Posterior vena cava (tissue), 2 donors: ENCODE measurements at regions of chr14 and their contacts with region 1.

Region 1: DNA sequence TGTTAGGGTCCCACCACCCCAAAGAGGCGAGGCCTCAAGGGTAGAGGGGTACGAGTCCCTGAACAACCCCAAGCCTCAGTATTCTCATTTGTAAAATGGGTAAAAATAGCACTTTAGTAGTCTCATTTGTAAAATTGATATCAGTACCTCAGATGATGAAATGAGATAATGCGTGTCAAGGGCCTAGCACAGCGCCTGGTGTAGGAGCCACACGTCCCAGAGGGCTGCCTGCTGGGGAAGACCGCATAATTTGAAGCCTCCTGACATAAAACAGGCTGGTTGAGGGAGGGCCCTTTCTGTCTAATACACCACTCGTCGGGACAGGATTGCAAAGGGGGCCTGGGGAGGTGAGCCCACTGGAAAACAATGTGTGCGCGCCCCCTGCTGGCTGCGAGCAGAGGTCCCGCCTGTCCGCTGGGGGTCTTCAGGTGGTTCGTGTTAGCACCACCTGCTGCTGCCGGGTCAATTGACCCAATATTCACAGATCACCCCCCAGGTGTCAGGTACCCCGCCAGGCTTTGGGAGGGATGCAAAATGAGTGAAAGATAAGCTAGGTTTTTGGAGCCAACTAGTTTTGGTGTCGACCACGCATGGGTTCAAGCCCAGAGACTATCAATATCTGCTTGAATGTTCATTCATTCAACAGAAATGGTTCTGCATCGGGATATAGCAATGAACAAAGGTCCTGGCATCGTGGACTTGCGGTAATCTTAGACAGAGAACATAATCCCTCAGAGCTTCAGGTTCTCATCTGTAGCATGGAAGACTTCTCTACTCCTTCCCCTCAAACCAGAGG is 24.7 kb upstream of the IRF2BPL start:
- DNase-seq: peak; percentile 88

Region 2: DNA sequence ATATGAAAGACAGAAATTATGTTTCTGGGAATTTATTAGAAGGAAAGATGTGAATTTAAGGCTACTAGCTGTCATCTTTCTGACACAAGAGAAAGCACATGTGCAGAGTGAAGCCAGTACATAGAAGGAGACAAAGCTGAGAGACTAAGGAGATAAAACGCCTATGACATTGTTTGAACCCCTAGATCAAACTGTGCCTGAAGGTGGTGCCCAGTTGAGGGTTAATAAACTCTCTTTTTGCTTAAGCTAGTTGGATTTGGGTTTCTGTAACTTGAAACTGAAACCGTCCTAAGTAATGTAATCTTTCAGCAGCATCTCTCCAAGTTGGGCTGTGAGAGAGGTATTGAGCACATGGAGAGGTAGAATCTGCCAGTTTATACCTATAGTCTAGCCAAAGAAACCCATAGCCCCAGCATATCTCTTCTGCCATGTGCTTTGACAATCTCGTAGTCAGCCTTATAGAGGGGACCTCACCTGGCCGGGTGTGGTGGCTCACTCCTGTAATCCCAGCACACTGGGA is 142.8 kb before region 1 on chr14:
- intact Hi-C with region 1: loop called in 1 of 2 experiments (anchors 5 kb)
- DNase-seq: no peak

Region 3: DNA sequence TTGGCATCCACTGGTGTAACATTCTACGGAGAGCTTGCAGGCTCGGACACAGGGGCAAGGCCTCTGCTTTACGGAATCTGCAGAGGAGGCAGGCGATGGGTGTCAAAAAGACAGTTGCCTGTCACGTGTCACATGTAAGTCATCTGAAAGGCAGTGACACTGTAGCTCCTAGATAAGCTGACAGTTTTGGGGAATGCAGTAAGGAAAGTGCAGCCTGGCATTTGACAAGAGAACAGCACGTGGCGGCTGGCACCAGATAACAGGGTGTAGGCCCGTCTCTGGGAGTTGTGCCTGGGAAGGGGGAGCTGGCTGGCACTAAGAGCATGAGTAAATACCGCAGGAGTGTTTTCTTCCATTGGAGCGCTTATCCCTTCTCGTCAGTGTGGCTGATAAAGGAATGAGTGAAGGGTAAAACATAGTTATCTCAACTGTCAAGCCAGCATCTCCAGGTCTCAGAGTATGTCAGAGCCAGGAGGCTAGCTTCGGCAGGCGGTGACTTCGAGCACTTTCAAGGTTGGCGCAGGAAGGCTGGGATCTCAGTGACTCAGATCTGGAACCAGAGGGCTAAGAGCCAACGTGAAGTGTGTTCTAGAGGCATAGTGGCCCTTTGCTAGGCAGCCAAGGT is 772.8 kb after region 1 on chr14:
- intact Hi-C with region 1: no loop called
- DNase-seq: no peak